PC-9 (cell line): ENCODE measurements at regions of chr3 and their contacts with region 1.

Region 1: DNA sequence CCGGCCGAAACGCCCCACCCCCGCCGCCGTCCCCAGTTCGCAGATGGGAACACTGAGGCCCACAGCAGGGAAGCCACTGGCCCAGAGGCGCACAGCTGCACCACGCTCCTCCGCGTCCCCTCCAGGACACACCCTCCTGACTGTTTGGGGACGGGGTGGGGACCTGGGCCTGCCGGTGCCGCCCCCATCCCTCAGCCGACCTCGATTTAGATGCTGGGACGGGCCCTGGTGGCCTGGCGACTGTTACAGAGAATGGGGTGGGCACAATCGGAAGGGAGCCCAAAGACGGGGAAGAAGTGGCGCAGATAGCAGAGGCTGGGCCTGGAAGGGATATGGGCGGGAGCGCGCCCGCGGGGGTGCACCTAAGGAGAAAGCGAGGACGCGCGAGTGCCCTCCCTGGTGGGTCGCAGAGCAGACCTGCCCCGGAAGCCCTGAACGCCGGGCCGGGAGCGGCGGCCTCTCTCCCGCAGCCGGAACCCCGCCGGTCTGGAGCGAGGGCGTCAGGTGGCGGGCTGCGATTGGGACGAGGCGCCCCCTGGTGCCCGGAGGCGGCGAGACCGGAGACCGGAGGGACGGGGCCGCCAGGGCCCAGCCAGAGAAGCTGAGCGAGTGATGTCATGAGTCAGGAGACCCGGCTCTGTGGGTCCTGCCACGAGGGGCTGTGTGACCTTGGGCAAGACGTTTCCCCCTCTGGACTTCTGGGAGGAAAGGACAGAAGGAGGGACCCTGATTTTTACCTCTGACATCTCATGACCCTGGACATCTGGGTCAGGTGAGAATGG is 78.4 kb downstream of the IQSEC1 start:
- DNase-seq: peak; percentile 65 to 91
- H3K4me3 ChIP-seq: peak overlapping the region; percentile 79
- H3K27ac ChIP-seq: peak overlapping the region; percentile 50
- H3K4me1 ChIP-seq: peaks cover 71% of the 10 kb centered on the region
- H3K27me3 ChIP-seq: no peaks in the 10 kb centered on the region
- CTCF ChIP-seq: peak; percentile 90

Region 2: GRCh38 chr3:12750223-12750622 is 244.6 kb before region 1 on chr3:
- CTCF ChIA-PET with region 1: no interaction called
- POLR2A ChIA-PET with region 1: no interaction called
- intact Hi-C with region 1: loop called (anchors 10 kb)
- DNase-seq: peak; percentile 65 to 74
- H3K4me3 ChIP-seq: no peak overlapping the region
- H3K27ac ChIP-seq: peak overlapping the region; percentile 93
- H3K4me1 ChIP-seq: peaks cover 58% of the 10 kb centered on the region
- H3K27me3 ChIP-seq: no peaks in the 10 kb centered on the region
- CTCF ChIP-seq: no peak

Region 3: DNA sequence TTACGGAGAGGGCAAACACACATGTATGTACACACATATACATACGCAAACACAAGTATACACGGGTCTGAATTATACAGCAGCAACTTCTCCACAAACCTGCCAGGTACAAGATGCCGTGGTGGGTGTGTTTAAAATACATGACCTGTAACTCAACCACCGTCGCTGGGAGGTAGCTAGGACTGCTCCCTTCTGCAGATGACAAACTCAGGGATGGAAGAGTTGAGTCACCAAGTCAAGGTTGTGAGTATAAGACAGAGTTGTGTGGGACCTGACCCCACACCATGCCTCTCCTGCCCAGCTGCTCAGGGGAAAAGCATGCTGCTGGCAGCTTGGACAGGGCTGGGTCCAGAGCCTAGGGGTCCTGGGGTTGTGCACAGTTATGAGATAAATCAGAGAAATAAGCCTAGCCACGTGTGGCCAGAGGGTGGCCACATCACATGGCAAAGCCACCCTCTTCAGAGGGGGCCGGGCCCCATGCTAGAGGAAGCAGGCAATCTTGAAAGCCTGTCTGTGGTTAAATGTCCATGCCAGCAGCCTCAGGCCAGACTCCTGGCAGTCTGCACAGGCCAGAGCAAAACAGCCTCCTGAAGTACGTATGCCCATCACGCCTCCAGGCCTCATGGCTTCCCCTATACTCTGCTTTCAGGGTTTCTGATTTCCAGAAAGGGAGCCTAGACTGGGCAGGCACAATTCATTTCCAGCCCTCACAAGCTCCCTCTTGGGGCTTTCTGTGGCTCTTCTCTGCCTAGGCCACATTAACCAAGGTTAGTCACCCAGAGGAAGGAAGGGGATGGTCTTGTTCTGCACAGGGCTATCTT is 45.7 kb before region 1 on chr3:
- CTCF ChIA-PET with region 1: no interaction called
- POLR2A ChIA-PET with region 1: interaction called, 9 read pairs
- intact Hi-C with region 1: loop called (anchors 5 kb)
- DNase-seq: peak in 1 of 2 experiments; percentile 53
- H3K4me3 ChIP-seq: no peak overlapping the region
- H3K27ac ChIP-seq: no peak overlapping the region
- H3K4me1 ChIP-seq: peaks cover 16% of the 10 kb centered on the region
- H3K27me3 ChIP-seq: no peaks in the 10 kb centered on the region
- CTCF ChIP-seq: no peak

Region 4: DNA sequence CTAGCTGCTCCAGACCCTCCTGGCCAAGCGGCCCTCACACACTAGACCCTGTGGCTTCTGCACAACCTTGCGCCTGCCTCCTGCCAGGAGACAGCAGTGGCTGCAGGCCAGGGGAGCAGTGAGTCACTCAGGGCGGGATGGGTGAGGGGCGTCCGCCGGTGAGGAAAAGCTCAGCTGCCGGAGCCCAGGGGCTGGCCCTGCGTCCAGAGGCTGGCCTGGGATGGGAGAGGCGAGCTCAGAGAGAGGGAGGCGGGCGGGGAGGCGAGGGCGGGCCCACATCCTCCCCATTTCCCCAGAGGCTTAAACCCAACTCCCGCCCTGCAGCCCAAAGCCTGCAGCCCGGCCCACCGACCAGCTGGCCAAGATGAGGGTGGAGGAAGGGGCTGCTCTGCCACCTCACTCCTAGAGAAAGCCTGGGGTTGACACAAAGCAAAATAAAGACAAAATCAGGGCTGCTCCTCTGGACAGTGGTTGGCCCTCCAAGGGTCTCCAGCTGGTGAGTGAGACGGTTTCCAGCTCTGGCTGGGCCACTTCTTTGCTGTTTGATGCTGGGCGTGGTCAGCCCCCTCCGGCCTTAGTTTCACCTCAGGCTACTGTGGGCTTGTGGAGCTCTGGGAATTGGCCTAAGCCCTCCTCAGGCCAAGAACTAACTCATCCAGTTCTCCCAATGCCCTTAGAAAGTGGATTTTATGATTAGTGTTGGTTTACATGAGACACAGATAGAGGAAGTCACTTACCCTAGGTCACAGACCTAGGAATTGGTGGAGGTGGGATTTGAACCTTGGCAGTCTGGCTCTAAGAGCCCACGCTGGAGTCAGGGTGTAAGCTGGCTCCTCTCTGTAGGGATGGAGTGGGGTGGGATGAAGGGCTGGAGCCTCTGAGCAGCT is 27.8 kb after region 1 on chr3:
- CTCF ChIA-PET with region 1: interaction called, 6 read pairs
- POLR2A ChIA-PET with region 1: interaction called, 6 read pairs
- intact Hi-C with region 1: loop called (anchors 1 kb)
- DNase-seq: peak; percentile 81 to 94
- H3K4me3 ChIP-seq: peak overlapping the region; percentile 61
- H3K27ac ChIP-seq: peak overlapping the region; percentile 87
- H3K4me1 ChIP-seq: peaks cover 62% of the 10 kb centered on the region
- H3K27me3 ChIP-seq: no peaks in the 10 kb centered on the region
- CTCF ChIP-seq: no peak

Region 5: GRCh38 chr3:13091898-13092611 is 97.3 kb after region 1 on chr3:
- CTCF ChIA-PET with region 1: no interaction called
- POLR2A ChIA-PET with region 1: interaction called, 3 read pairs
- intact Hi-C with region 1: loop called (anchors 5 kb)
- DNase-seq: peak; percentile 69 to 87
- H3K4me3 ChIP-seq: no peak overlapping the region
- H3K27ac ChIP-seq: no peak overlapping the region
- H3K4me1 ChIP-seq: peaks cover 18% of the 10 kb centered on the region
- H3K27me3 ChIP-seq: no peaks in the 10 kb centered on the region
- CTCF ChIP-seq: peak; percentile 98

Region 6: DNA sequence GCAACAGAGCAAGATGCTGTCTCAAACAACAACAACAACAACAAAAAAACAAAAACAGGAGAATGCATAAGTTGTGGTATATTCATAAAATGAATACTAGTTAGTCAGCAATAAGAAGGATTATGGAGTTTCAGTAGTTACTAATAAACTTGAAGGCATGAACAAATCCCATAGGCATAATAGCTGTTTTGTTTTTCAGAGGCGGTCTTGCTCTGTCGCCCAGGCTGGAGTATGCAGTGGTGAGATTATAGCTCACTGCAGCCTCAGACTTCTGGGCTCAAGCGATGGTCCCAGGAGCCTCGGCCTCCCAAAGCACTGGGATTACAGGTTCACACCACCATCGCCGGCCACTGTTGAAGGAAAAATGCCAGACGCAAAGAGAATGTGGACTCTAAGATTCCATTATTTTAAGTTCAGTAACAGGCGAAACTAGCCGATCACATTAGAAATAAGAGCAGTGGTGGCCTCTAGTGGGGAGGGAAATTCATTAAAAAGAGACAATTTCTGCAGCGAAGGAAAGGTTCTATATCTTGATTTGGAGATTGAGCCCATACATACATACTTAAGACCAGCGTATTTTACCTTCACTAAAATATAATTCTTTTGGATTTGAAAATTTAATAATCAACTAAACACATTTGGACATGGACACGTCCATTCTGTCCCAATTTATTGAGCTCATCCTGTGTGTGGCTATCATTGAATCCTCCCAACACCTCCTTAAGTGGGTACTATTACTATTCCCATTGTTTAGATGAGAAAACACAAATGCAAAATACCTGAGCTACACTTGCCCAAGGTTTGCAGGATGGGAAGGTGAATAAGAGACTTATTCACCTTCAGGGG is 457.9 kb after region 1 on chr3:
- CTCF ChIA-PET with region 1: no interaction called
- POLR2A ChIA-PET with region 1: no interaction called
- intact Hi-C with region 1: loop called (anchors 10 kb)
- DNase-seq: peak; percentile 25 to 43
- H3K4me3 ChIP-seq: peak overlapping the region; percentile 59; the same call in 1 of the 2 replicates
- H3K27ac ChIP-seq: peak overlapping the region; percentile 71
- H3K4me1 ChIP-seq: peaks cover 13% of the 10 kb centered on the region
- H3K27me3 ChIP-seq: no peaks in the 10 kb centered on the region
- CTCF ChIP-seq: peak; percentile 77